Posterior vena cava (tissue), 2 donors: ENCODE measurements at regions of chr10 and their contacts with region 1.

Region 1: DNA sequence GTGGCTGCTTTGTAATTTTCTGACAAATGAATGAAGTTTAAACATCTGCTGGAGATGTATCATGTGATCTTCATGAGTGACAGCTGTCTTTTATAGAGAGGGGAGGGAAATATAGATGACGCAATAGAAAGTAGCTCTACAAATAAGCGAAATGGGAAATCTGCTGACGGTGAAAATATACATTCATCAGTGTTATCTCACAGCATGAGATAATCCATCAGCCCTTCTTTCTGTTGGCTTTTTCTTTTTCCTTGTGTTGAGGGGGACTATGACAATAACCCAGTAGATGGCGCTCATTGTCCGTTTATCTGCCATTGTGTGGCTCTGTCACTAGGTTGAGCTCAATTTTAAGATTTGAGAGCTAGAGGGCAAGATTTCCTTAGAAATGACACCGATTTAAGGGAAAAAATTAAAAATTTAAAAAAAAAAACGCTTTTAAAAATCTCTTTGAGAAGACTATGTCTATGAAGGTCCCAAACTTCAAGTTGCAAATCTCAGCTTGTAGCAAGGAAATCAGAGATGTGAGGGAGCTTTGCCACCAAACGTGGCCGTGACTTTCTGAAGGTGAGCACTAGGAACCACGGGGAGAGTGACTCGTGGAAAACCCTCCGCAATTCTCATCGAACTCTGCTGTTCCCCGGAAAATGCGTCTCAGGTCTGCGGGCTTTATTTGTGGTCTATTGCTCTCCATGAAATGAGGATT is 114.6 kb upstream of the SFMBT2 start:
- DNase-seq: no peak

Region 2: DNA sequence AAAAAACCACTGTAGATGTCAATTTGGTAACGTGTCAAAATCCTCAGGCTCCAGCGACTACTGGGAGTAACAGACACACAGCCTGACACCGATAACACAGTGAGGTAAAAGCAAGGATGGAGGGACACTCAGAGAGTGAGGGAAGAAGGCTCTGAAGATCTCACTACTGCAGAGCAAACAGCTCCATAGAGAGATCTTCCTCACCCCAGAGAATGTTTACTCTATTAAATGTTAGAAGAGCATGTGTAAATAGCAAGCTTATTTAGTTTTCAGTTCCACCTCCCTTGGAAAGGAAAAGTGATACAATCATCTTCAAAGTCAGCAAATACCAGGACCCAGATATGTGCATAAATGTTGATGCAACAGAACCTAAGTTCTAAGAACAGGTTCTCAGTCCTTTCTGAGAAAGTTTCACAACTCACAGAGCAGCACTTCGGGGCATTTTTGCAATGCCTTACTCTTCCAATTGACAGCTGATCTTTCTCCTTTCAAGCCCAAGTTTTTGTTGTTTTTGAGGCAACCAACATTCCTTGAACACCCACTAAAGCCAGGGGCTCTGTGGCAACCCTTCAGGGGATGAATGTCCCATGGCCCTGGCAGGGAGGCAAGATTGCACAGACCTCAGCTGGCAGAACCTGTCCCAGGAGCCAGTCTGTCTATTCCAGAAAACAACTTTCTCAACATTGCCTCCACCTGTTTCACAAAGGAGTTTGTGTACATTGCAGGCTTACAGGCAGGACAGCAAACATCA is 292.0 kb before region 1 on chr10:
- intact Hi-C with region 1: no loop called
- DNase-seq: no peak

Region 3: DNA sequence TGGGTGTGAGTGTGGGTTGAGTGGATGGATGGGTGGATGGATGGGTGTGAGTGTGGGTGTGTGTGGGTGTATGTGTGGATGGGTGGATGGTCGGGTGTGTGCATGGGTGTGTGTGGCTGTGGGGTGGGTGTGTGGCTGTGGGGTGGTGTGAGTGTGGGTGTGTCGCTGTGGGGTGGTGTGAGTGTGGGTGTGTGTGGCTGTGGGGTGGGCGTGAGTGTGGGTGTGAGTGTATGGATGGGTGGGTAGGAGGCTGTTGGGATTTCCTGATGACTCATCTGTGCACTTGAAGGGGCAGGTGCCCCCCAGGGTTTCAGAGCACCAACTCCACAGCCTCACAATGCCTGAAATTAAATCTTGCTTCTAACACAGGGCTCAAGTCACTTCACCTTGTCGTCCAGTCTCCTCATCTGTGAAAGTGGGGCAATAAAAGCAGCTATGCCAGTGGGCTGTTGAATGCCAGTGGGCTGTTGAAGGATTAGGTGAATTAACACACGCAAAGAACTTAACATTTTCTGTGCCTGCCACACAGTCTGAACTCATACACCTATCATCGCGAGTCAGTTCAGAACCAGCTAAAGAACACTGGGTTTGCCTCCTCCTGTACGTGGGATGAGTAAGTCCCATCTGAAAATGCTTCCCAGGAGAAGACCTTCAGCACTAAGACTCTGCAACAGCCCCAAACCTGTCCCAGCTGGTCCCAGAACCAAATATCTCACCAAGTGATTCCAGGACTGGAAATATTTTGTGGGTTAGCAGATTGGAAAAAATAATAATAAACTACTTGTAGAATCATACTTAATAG is 146.7 kb before region 1 on chr10:
- intact Hi-C with region 1: no loop called
- DNase-seq: no peak

Region 4: GRCh38 chr10:7471720-7472367 is 53.6 kb before region 1 on chr10:
- intact Hi-C with region 1: no loop called
- DNase-seq: no peak

Region 5: DNA sequence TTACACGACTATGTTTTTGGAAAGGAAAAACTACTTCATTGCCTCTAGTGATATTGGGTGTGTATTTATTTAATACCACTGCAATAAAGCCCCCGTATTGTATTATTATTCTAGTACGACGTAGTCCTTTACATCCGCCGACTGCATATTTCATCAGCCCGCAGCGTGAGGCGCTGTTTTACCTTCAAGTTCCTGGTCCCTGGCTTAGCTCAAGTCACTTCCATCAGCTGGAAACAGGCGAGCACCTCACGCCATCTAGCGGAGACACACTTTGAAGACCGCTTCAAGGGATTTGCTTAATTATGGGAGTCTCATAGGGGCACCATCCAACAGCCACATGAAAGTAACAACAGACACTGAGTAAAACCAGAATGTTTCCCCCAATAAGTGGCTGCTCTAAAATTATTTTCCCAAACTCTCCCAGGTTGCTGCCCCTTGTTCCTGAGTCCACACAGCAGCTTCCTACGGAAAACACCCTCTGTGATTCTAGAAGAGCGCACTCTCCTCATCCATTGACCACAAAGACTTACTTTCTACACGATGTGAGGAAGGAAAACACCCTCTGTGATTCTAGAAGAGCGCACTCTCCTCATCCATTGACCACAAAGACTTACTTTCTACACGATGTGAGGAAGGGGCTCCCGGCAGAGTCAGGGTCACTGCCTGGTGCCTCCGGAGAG is 161.9 kb after region 1 on chr10:
- intact Hi-C with region 1: loop called (anchors 2 kb)
- DNase-seq: peak; percentile 92